WTC11 (cell line): ENCODE measurements at regions of chr6 and their contacts with region 1.

Region 1: GRCh38 chr6:98980814-98981213 is 33.1 kb upstream of the FBXL4 start:
- DNase-seq: peak; percentile 38
- ATAC-seq: peak; percentile 99
- H3K4me3 Mint-ChIP-seq: no peak overlapping the region
- H3K27ac Mint-ChIP-seq: no peak overlapping the region
- H3K4me1 Mint-ChIP-seq: peaks cover 9% of the 10 kb centered on the region; the same call in 1 of the 2 replicates
- H3K27me3 Mint-ChIP-seq: no peaks in the 10 kb centered on the region
- CTCF ChIP-seq: no peak

Region 2: DNA sequence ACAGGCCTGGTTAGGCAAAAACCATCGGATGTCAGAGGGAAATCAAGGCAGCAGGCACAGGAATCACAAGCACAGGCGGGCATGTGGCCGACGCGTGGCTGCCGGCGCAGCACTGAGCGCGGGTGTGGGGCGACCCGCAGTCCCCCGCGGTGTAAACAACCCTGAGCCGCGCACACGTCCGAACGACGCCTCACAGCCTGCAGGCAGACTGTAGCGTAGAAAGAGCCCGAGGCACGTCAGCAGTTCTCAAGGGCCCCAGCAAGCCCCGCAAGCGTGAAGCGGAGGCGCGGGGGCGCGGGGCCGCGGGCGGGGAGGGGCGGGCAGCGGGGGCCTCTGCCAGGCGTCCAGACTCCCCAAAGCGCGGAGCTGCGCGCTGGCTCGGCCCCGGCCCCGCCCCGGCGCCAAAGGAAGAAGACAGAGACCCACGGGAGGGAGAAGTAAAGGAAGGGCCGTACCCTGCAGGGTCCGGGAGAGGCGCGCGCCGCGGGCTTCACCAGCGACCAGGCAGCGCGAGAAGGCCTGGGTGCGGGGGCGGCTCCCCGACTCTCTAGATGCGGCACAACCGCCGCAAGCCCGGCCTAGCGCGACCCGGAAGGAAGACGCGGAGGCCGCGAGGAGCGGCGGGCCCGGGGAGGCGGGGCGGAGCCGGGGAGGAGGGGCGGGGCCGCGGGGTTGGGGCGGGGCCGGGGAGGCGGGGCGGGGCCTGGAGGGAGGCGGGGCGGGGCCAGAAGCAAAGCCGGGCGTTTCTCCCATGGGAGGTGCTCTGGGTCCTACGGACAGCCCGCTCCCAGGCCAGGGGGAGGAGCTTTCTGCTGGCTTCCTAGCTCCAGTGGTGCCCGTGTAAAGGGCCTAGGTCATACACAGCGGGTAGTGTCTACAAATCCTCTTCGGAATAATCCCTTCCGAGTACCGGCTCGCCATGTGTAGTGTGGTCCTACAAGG is 33.2 kb before region 1 on chr6 and contains the start of gene FBXL4:
- CTCF ChIA-PET with region 1: interaction called, 10 read pairs
- POLR2A ChIA-PET with region 1: interaction called, 3 read pairs
- DNase-seq: peak; percentile 89
- ATAC-seq: peak; percentile 99
- H3K4me3 Mint-ChIP-seq: peak within 1 kb of the TSS; percentile 88
- H3K27ac Mint-ChIP-seq: peak within 1 kb of the TSS; percentile 86
- H3K4me1 Mint-ChIP-seq: peaks cover 16% of the 10 kb centered on the region
- H3K27me3 Mint-ChIP-seq: no peaks in the 10 kb centered on the region
- CTCF ChIP-seq: no peak
- total RNA-seq, gene FBXL4: 10.3 to 12.6 TPM (median 11.4 TPM) in 3 replicates